Left ventricle myocardium inferior (tissue), 1 donor: ENCODE measurements at regions of chr6 and their contacts with region 1.

Region 1: DNA sequence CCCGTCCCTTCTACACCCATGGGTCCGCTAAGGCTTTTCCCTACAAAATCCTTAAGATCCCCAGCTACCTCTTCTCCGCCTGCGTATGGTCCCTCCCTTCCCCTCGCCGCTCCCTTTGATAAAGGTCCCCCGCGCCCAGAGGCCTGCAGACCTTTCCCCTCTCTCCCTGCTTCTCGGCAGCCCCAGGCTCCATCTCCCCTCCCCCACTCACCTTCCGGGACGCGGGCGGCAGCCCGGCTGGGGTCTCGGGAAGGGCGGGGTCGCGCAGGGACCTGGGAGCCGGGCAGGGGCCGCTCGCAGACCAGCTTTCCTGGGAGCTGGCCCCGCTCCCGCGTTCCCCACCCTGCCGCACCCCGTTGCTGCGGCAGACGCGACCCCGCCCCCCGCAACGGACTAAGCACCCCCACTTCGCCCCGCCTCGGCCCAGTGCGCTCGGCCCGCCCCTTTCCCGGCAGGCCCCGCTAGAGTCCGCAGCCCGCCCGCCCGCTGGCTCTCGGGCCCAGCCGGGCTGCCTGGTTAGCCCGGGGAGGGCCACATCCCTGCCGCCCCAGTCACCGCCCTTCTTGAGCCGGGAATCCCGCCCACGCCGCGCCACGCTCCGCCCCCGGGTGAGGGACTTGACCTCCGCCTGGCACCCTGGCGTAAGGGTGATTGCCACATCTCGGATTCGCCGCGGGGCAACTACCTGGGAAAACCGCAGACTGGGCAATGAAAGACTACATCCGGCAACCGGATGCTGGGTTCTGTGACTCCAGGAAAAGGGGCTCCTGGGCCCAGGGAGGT is at the start of gene FLOT1:
- DNase-seq: peak; percentile 99
- H3K4me3 ChIP-seq: peak within 1 kb of the TSS; percentile 93
- H3K27ac ChIP-seq: peak within 1 kb of the TSS; percentile 98
- H3K4me1 ChIP-seq: peaks cover 73% of the 10 kb centered on the region
- H3K27me3 ChIP-seq: no peaks in the 10 kb centered on the region
- CTCF ChIP-seq: no peak
- total RNA-seq, gene FLOT1: 223 TPM

Region 2: GRCh38 chr6:30883685-30884520 is 141.4 kb after region 1 on chr6 and contains the start of gene DDR1:
- intact Hi-C with region 1: loop called (anchors 10 kb)
- DNase-seq: peak; percentile 81
- H3K4me3 ChIP-seq: peak within 1 kb of the TSS; percentile 87
- H3K27ac ChIP-seq: peak within 1 kb of the TSS; percentile 86
- H3K4me1 ChIP-seq: peaks cover 58% of the 10 kb centered on the region
- H3K27me3 ChIP-seq: no peaks in the 10 kb centered on the region
- CTCF ChIP-seq: no peak
- total RNA-seq, gene DDR1: 28.2 TPM